Posterior vena cava (tissue), 2 donors: ENCODE measurements at regions of chr16 and their contacts with region 1.

Region 1: DNA sequence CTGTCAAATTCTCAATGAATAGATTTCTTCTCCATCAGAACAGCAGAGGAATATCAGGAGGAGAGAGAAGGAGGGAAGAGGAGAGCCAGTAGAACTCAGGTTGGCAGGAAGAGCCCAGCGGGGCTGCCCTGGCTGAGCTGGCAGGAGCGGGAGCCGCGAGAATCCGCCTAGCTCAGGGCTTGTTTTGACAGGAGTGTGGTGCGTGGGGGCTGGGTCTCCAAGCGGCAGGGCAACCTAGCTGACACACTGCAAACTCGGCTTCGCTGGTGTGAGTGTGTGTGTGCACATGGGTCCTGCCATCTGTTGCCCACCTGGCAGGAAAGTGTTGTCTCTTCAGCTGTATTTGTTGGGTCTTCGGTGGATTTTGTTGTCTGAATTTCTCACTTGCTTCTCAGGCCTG is 27.9 kb upstream of the BCAR1 start:
- DNase-seq: no peak

Region 2: GRCh38 chr16:74666425-74667254 is 612.7 kb before region 1 on chr16 and contains the start of gene RFWD3:
- intact Hi-C with region 1: no loop called
- DNase-seq: peak; percentile 98
- total RNA-seq, gene RFWD3: 12.3 to 13.2 TPM

Region 3: GRCh38 chr16:75319513-75320411 is 40.5 kb after region 1 on chr16:
- intact Hi-C with region 1: loop called in 1 of 2 experiments (anchors 1 kb)
- DNase-seq: no peak